ENCODE measurements at regions of chr4 and their contacts with region 1.

Region 1: DNA sequence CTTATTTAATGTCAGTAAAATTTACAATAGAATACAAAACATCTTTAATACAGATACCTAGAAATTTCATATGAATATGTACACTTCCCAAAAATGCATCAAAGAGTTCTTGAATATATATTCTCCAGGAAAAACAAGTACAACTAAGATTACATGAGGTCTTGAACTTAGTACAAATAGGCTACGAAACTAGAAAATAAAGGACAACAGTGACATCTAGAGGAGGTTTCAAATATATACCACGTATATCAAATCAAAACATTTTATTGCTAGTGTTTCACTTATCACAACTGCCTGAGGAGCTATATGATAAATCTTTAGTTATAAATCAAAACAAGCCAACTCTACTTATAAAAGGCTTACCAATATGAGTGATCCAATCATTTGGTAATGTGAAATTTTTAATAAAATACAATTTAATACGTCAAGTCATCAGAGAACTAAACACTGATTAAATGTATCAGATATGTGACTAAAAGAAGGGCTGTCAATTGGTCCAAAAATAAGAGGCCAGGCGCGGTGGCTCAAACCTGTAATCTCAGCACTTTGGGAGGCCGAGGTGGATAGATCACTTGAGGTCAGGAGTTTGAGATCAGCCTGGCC is 36.6 kb downstream of the ANAPC10 start:
- DNase-seq: peak; percentile 15
- H3K4me3 ChIP-seq: no peak overlapping the region
- H3K27ac ChIP-seq: no peak overlapping the region
- H3K27me3 ChIP-seq: no peaks in the 10 kb centered on the region
- CTCF ChIP-seq: peak; percentile 44

Region 2: DNA sequence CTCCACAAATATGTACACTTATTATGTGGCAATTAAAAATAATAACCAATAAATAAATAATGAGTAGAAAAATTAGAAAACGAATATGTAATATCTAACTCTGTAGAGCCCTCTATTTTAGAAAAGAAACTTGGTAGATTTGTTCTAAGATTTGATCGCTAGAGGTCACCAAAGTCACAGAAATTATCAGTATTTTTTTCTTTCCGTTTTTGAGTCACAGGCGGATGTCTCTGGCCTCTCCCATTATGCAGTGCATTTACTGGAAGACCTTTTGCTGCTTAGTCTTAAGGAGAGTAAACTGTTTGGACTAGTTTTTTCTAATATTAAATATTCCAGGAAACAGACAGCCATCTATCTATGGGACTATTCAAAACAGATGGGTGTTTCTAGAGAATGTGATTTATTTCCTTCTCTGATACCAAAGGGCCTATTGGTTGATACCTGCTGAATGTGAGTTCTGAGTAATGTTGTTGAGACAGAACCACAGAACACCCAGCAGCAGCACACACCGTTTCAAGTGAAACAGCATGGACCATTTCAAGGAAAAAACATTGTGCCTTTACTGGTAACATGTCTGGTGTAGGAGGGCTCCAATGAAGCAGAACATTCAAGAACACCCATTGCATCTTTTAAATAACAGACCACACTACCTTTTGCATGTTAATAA is 886.9 kb before region 1 on chr4:
- CTCF ChIA-PET with region 1: interaction called, 12 read pairs
- POLR2A ChIA-PET with region 1: no interaction called
- DNase-seq: peak; percentile 32
- H3K4me3 ChIP-seq: no peak overlapping the region
- H3K27ac ChIP-seq: no peak overlapping the region
- H3K27me3 ChIP-seq: no peaks in the 10 kb centered on the region
- CTCF ChIP-seq: peak; percentile 42

Region 3: GRCh38 chr4:144721994-144722393 is 339.4 kb before region 1 on chr4:
- CTCF ChIA-PET with region 1: no interaction called
- POLR2A ChIA-PET with region 1: no interaction called
- DNase-seq: no peak
- H3K4me3 ChIP-seq: no peak overlapping the region
- H3K27ac ChIP-seq: no peak overlapping the region
- H3K27me3 ChIP-seq: no peaks in the 10 kb centered on the region
- CTCF ChIP-seq: no peak

Region 4: GRCh38 chr4:144799486-144799885 is 261.9 kb before region 1 on chr4:
- CTCF ChIA-PET with region 1: no interaction called
- POLR2A ChIA-PET with region 1: no interaction called
- DNase-seq: no peak
- H3K4me3 ChIP-seq: no peak overlapping the region
- H3K27ac ChIP-seq: no peak overlapping the region
- H3K27me3 ChIP-seq: no peaks in the 10 kb centered on the region
- CTCF ChIP-seq: no peak

Region 5: DNA sequence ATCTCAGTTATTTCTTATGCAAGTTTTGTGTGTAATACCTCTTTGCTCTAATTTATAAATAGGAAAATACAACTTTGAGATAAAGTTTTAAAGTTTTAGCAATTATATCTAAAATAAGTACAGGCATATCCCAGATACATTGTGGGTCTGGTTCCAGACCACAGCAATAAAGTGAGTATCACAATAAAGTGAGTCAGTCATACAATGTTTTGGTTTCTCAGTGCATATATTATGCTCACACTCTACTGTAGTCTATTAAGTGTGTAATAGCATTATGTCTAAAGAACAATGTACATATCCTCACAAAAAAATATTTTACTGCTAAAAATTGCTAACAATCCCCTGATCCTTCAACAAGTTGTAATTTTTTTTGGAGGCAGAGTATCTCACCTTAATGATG is 12.6 kb before region 1 on chr4:
- CTCF ChIA-PET with region 1: interaction called, 17 read pairs
- POLR2A ChIA-PET with region 1: no interaction called
- DNase-seq: no peak
- H3K4me3 ChIP-seq: no peak overlapping the region
- H3K27ac ChIP-seq: no peak overlapping the region
- H3K27me3 ChIP-seq: no peaks in the 10 kb centered on the region
- CTCF ChIP-seq: no peak

Region 6: DNA sequence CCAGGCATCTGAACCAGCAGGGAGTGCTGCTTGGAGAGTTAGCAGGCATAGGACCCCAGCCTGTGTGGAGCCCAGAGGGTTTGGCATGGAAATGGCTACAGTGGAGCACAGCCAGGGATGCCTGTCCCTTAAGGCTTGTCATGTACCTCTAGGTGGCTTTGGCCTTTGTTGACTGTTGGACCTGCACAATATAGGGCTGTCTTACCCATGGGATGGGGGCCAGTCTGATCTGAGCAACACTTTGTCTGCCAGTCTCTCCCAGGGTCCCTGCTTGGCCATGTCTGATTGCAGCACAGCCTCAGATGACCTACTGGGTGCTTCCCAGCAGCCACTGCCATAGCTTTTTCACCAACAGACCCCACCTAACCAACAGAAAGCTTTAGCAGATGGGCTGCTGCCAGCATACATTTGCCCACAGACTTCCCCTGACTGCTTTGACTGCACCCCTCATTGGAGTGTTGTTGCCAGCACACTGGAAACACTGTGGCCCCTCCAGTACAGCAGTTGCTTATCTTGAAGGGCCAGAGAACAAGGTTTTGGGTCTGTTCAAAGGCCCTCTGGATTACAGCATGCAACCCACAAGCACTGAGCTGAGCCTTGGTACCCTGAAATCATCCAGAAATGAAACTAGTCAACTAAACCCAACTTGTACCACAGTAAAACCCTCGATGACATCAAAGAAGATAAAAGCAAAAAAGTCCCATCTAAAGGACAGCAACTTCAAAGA is 14.5 kb after region 1 on chr4:
- CTCF ChIA-PET with region 1: interaction called, 12 read pairs
- POLR2A ChIA-PET with region 1: no interaction called
- DNase-seq: no peak
- H3K4me3 ChIP-seq: no peak overlapping the region
- H3K27ac ChIP-seq: no peak overlapping the region
- H3K27me3 ChIP-seq: no peaks in the 10 kb centered on the region
- CTCF ChIP-seq: no peak

Region 7: DNA sequence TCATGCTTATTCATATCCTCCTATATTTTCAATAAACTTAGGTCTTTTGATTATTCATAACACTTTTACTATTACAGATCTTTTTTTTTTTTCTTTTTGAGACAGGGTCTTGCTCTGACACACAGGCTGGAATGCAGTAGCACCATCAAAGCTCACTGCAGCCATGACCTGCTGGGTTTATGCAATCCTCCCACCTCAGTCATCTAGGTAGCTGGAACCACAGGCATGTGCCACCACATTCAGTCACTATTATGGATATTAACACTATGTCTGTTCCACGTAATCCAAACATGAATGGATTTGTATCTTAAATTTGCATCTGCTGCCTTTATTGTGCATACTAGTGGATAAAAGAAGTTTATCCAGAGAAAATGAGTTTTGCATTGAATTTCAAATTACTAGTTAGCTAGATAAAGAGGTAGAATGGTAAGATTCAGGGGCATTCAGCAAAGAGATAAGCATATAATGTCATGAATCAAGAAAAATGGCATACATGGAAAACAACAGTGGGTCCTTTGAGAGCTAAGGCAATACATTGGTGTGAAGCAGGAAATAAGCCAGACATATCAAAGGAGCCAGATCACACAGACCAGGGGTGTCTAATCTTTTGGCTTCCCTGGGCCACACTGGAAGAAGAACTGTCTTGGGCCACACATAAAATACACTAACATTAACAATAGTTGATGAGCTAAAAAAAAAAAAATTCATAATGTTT is 22.6 kb after region 1 on chr4:
- CTCF ChIA-PET with region 1: interaction called, 11 read pairs
- POLR2A ChIA-PET with region 1: interaction called, 4 read pairs
- DNase-seq: no peak
- H3K4me3 ChIP-seq: no peak overlapping the region
- H3K27ac ChIP-seq: no peak overlapping the region
- H3K27me3 ChIP-seq: no peaks in the 10 kb centered on the region
- CTCF ChIP-seq: no peak

Measured in AG04450 (cell line).